Gastrocnemius medialis (tissue), 4 donors: ENCODE measurements at regions of chr7 and their contacts with region 1.

Region 1: DNA sequence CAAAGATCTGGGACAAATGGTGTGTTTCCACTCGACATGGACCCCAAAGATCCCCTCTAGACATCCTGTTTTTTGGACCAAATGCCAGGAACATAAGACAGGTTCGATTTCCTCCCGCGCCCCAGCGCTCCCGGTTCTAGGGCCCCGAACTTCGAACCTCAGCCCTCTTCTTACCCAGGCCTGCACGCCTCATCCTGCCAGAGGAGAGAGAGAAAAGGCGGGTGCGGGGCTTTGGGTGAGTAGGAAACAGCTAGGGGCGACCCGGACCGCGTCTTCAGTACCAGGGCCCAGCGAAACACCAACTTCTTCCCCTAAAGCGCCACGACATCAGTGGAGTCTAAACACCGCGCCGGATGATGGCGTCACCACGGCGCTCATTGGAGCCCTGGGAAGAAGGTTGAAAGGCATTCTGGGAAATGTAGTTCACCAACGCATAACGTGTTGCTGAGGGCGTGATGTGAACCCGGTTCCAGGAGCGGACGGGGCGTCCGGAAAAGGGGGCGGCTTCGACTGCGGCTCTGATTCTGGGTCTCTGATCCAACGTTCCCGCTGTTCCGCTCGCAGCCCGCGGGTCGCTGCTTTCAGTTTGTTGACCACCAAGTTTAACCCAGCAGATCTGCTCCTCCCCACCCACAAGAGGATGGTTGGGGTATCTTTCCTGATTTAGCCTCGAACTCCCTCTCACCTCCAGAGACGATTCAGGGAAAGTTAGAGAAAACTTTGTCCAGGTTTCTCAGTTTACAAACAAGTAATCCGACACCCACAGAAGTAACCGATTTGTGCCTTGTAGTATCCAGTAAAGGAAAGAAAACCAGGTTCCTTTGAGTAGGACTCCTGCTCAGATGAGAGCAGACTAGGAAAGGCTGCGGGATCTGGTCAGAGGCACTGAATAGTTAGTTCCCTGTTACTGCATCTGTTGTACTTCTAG is at the start of gene BET1:
- DNase-seq: peak; percentile 90 to 92
- ATAC-seq: peak; percentile 99 to 100
- H3K4me3 ChIP-seq: peak within 1 kb of the TSS; percentile 81 to 94 (median 90)
- H3K27ac ChIP-seq: peak within 1 kb of the TSS; percentile 86 to 91 (median 88)
- H3K4me1 ChIP-seq: peaks cover 16 to 20% of the 10 kb centered on the region in 2 donors
- H3K27me3 ChIP-seq: no peaks in the 10 kb centered on the region
- CTCF ChIP-seq: no peak
- POLR2A ChIP-seq: peak; percentile 50 to 54
- total RNA-seq, gene BET1: 7.0 to 11.0 (median 9.2) TPM

Region 2: DNA sequence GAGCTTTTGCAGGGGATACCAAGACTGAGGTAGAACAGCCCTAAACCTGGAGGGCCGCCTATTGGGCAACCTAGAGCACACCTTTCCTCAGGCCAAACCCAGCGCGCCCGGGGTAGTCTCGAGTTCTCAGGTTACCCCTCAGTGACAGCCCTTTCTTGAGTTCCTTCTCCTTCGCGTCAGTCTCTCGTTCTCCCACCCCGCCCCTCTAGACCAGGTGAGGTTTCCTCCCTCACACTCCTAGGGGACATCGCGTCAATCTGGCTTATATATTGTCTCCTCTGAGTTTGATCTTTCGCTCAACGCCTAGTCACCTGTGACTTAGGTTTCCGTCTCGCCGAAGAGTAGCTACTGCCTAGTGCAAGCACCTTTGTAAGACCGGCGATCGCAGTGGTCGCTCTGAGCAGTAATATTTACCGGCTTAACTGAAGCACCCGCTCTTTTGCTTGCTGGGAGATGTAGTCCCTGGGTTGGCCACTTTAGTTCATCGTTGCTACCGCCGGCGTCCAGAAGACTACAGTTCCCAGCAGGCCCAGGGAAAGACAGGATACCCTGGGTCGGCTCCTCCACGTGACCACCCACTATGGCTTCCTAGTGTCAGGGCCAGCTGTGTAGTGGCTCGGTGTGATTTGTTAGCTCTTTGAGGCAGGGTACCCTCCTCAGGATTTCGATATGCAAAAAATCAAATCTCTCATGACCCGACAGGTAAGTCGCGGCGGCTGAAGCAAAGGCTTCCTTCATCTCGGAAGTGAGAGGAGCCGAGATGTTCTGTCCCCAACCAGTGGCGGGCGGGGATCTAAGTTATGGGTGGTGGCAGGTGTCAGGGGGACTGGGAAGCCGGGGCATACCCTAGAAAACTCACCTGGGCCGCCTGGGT is 772.3 kb before region 1 on chr7 and contains the start of gene VPS50:
- in situ Hi-C with region 1: loop called in 1 of 4 experiments (anchors 25 kb)
- intact Hi-C with region 1: no loop called
- DNase-seq: peak; percentile 93 to 96
- ATAC-seq: peak; percentile 100
- H3K4me3 ChIP-seq: peak within 1 kb of the TSS; percentile 76 to 92 (median 80)
- H3K27ac ChIP-seq: peak within 1 kb of the TSS; percentile 79 to 86 (median 85)
- H3K4me1 ChIP-seq: peaks cover 19 to 25% of the 10 kb centered on the region in 2 donors
- H3K27me3 ChIP-seq: no peaks in the 10 kb centered on the region
- CTCF ChIP-seq: peak in 3 of 5 experiments; percentile 8 to 35 (median 19)
- POLR2A ChIP-seq: peak; percentile 15 to 24
- total RNA-seq, gene VPS50: 17.2 to 52.2 (median 34.3) TPM

Region 3: GRCh38 chr7:93921607-93922566 is 82.4 kb before region 1 on chr7 and contains the start of gene GNG11:
- in situ Hi-C with region 1: no loop called
- intact Hi-C with region 1: loop called (anchors 2 kb)
- DNase-seq: peak; percentile 27 to 44
- ATAC-seq: peak; percentile 69 to 72
- H3K4me3 ChIP-seq: peak within 1 kb of the TSS; percentile 58 to 68 (median 63)
- H3K27ac ChIP-seq: peak within 1 kb of the TSS; percentile 76 to 85 (median 82)
- H3K4me1 ChIP-seq: peaks cover 5 to 15% of the 10 kb centered on the region in 2 donors
- H3K27me3 ChIP-seq: peaks cover 3 to 19% (median 10%) of the 10 kb centered on the region in 3 donors
- CTCF ChIP-seq: no peak
- POLR2A ChIP-seq: peak; percentile 21 to 40
- total RNA-seq, gene GNG11: 4.6 to 11.4 (median 6.9) TPM

Region 4: GRCh38 chr7:93935112-93935511 is 69.2 kb before region 1 on chr7:
- in situ Hi-C with region 1: loop called in 1 of 4 experiments (anchors 10 kb)
- intact Hi-C with region 1: no loop called
- DNase-seq: no peak
- ATAC-seq: no peak
- H3K4me3 ChIP-seq: no peak overlapping the region
- H3K27ac ChIP-seq: no peak overlapping the region
- H3K4me1 ChIP-seq: no peaks in the 10 kb centered on the region
- H3K27me3 ChIP-seq: no peaks in the 10 kb centered on the region
- CTCF ChIP-seq: no peak
- POLR2A ChIP-seq: no peak

Region 5: GRCh38 chr7:94028768-94029167 is 24.5 kb after region 1 on chr7:
- in situ Hi-C with region 1: no loop called
- intact Hi-C with region 1: no loop called
- DNase-seq: no peak
- ATAC-seq: no peak
- H3K4me3 ChIP-seq: no peak overlapping the region
- H3K27ac ChIP-seq: no peak overlapping the region
- H3K4me1 ChIP-seq: no peaks in the 10 kb centered on the region
- H3K27me3 ChIP-seq: no peaks in the 10 kb centered on the region
- CTCF ChIP-seq: no peak
- POLR2A ChIP-seq: no peak